Activated CD4-positive, alpha-beta T cell treated with anti-CD3 and anti-CD28 coated beads, Interleukin-2, amount 10 ng/mL, durations not matched to agents 24 days and 14 days (primary cell): ENCODE measurements at regions of chr4 and their contacts with region 1.

Region 1: GRCh38 chr4:602559-602942 is 22.8 kb upstream of the PDE6B start:
- DNase-seq: peak; percentile 87
- H3K4me3 Mint-ChIP-seq: no peak overlapping the region
- H3K27ac Mint-ChIP-seq: no peak overlapping the region
- H3K4me1 Mint-ChIP-seq: peaks cover 4% of the 10 kb centered on the region
- H3K27me3 Mint-ChIP-seq: peaks cover 4% of the 10 kb centered on the region

Region 2: DNA sequence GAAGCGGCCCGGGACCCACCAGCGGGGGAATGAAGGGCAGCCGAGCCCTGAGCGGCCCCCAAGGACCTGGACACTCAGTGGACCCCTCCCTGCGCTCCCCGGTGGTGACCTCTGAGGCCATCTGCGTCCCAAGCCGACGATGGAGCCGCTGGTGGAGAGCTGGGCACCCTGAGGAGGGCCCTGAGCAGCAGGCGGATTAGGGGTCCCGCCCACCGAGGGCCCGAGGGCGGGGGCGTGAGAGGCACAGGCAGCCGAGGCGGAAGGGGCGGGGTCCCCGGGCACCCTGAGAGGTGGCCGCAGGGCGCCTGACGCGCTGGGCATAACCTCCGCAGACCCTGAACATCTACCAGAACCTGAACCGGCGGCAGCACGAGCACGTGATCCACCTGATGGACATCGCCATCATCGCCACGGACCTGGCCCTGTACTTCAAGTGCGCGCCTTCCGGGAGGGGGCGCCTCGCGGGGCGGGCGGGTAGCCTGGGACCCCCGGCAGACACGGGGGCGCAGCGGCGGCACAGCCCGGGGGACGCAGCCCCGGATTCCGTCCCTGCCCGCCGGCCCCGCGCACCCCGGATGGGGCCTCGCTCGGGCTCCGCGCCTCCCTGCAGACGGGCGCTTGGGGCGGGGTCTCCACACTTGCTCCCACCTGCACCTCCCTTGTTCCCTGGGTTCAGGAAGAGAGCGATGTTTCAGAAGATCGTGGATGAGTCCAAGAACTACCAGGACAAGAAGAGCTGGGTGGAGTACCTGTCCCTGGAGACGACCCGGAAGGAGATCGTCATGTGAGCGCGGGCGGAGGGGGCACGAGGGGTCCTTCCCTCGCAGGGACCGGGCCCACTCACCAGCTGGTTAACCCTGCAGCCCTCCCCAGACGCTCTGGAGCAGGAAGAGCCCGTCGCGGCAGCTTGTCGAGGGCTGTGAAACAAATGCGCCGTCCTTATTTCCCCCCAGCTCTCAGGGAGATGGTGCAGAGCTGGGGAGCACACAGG is 61.2 kb after region 1 on chr4:
- intact Hi-C with region 1: loop called (anchors 5 kb)
- DNase-seq: peak; percentile 93
- H3K4me3 Mint-ChIP-seq: peak overlapping the region; percentile 84
- H3K27ac Mint-ChIP-seq: peak overlapping the region; percentile 84
- H3K4me1 Mint-ChIP-seq: peaks cover 6% of the 10 kb centered on the region
- H3K27me3 Mint-ChIP-seq: no peaks in the 10 kb centered on the region